A549 (cell line): ENCODE measurements at regions of chr5 and their contacts with region 1.

Region 1: GRCh38 chr5:157471709-157472108 is 11.7 kb downstream of the NIPAL4 start:
- DNase-seq: peak; percentile 50 to 51
- ATAC-seq: peak; percentile 23 to 69; a peak in 3 of 6 replicates
- H3K4me3 ChIP-seq: no peak overlapping the region
- H3K27ac ChIP-seq: peak overlapping the region in 1 of 2 experiments; percentile 45; a peak in 2 of 6 replicates
- H3K4me1 ChIP-seq: peaks cover 19% of the 10 kb centered on the region
- CTCF ChIP-seq: peak; percentile 71
- EP300 ChIP-seq: no peak
- POLR2A ChIP-seq: no peak
- RAD21 ChIP-seq: peak; percentile 59 to 64

Region 2: GRCh38 chr5:157342822-157343402 is 128.8 kb before region 1 on chr5:
- CTCF ChIA-PET with region 1: interaction called, 29 read pairs
- POLR2A ChIA-PET with region 1: no interaction called
- DNase-seq: peak; percentile 56 to 71
- ATAC-seq: peak; percentile 75 to 97; a peak in 5 of 6 replicates
- H3K4me3 ChIP-seq: no peak overlapping the region
- H3K27ac ChIP-seq: no peak overlapping the region
- H3K4me1 ChIP-seq: no peaks in the 10 kb centered on the region
- CTCF ChIP-seq: peak; percentile 52
- EP300 ChIP-seq: no peak
- POLR2A ChIP-seq: no peak
- RAD21 ChIP-seq: peak; percentile 53 to 57

Region 3: GRCh38 chr5:157354800-157355199 is 116.9 kb before region 1 on chr5:
- CTCF ChIA-PET with region 1: interaction called, 35 read pairs
- POLR2A ChIA-PET with region 1: no interaction called
- DNase-seq: peak; percentile 19 to 21
- ATAC-seq: peak; percentile 56 to 86; a peak in 4 of 6 replicates
- H3K4me3 ChIP-seq: no peak overlapping the region
- H3K27ac ChIP-seq: no peak overlapping the region
- H3K4me1 ChIP-seq: no peaks in the 10 kb centered on the region
- CTCF ChIP-seq: peak; percentile 46
- EP300 ChIP-seq: no peak
- POLR2A ChIP-seq: no peak
- RAD21 ChIP-seq: peak in 1 of 2 experiments; percentile 19; a peak in 1 of 5 replicates

Region 4: GRCh38 chr5:157366741-157367674 is 104.7 kb before region 1 on chr5:
- CTCF ChIA-PET with region 1: interaction called, 35 read pairs
- POLR2A ChIA-PET with region 1: no interaction called
- DNase-seq: peak; percentile 52 to 74
- ATAC-seq: peak; percentile 76 to 93
- H3K4me3 ChIP-seq: no peak overlapping the region
- H3K27ac ChIP-seq: peak overlapping the region; percentile 1 to 64; a peak in 3 of 6 replicates
- H3K4me1 ChIP-seq: peaks cover 18% of the 10 kb centered on the region
- CTCF ChIP-seq: peak; percentile 59
- EP300 ChIP-seq: no peak
- POLR2A ChIP-seq: no peak
- RAD21 ChIP-seq: peak; percentile 87 to 96

Region 5: DNA sequence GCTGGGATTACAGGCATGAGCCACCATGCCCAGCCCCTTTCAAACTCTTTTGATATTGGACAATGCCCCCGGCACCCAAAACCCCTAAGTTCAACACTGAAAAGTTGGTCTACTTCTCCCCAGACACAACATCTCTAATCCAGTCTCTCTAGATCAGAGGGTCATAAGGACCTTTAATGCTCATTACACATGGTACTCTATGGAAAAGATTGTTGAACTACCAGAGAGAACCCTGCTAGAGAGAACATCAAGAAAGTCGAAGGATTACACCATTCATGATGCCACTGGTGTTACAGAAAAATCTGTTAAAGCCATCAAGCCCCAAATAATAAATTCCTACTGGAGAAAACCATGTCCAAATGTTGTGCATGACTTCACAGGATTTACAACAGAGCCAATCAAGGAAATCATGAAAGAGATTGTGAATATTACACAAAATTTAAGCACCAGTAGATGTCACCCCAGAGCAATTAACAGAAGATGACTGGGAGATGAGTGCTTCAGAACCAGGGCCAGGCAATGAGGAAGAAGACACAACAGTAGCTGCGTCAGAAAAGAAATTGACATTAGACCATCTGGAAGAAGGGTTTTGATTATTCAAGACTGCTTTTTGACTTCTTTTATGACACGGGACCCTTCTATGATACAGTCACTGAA is 40.0 kb before region 1 on chr5:
- CTCF ChIA-PET with region 1: interaction called, 47 read pairs
- POLR2A ChIA-PET with region 1: no interaction called
- DNase-seq: peak; percentile 35 to 63
- ATAC-seq: peak; percentile 80 to 91; a peak in 4 of 6 replicates
- H3K4me3 ChIP-seq: no peak overlapping the region
- H3K27ac ChIP-seq: peak overlapping the region in 1 of 2 experiments; percentile 34; a peak in 1 of 6 replicates
- H3K4me1 ChIP-seq: no peaks in the 10 kb centered on the region
- CTCF ChIP-seq: peak; percentile 74
- EP300 ChIP-seq: no peak
- POLR2A ChIP-seq: no peak
- RAD21 ChIP-seq: peak; percentile 68 to 74

Region 6: DNA sequence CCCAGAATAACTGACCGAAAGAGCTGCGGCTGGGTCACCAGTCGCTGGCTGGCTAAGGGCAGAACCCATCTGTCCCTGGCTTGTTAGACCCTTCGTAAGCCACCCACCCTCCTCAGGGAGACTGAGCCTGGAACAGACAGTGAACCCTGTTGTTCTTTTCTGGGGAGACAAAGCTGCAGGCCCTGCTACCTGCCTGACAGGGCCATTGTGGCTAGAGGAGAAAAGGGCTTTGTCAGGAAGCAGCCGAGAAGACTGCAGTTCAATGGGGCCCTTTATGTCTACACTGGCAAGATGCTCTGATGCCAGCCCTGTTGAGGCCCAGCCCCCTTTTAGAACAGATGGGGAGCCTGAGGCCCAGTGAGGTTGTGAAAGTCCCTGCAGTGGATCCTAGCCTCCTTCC is 15.4 kb before region 1 on chr5:
- CTCF ChIA-PET with region 1: interaction called, 96 read pairs
- POLR2A ChIA-PET with region 1: interaction called, 4 read pairs
- DNase-seq: no peak
- ATAC-seq: no peak
- H3K4me3 ChIP-seq: no peak overlapping the region
- H3K27ac ChIP-seq: no peak overlapping the region
- H3K4me1 ChIP-seq: peaks cover 14% of the 10 kb centered on the region
- CTCF ChIP-seq: no peak
- EP300 ChIP-seq: no peak
- POLR2A ChIP-seq: no peak
- RAD21 ChIP-seq: no peak

Region 7: GRCh38 chr5:157523976-157524375 is 52.3 kb after region 1 on chr5:
- CTCF ChIA-PET with region 1: no interaction called
- POLR2A ChIA-PET with region 1: no interaction called
- DNase-seq: no peak
- ATAC-seq: no peak
- H3K4me3 ChIP-seq: no peak overlapping the region
- H3K27ac ChIP-seq: no peak overlapping the region
- H3K4me1 ChIP-seq: 0 out of 3 replicates have a peak, but pooled peaks cover 3% of the 10 kb centered on the region
- CTCF ChIP-seq: no peak
- EP300 ChIP-seq: no peak
- POLR2A ChIP-seq: no peak
- RAD21 ChIP-seq: no peak